Prostate gland (tissue), 2 donors: ENCODE measurements at regions of chr14 and their contacts with region 1.

Region 1: DNA sequence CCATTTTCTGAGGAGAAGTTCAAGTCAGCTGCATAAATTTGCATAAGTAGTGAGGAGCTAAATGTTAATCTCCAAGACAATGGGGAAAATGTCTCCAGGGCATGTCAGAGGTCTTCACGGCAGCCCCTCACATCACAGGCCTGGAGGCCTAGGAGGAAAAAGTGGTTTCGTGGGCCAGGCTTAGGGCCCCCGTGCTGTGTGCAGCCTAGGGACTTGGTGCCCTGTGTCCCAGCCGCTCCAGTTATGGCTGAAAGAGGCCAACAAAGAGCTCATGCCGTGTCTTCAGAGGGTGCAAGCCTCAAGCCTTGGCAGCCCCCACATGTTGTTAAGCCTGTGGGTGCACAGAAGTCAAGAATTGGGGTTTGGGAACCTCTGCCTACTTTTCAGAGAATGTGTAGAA is 41.9 kb upstream of the RD3L start:
- DNase-seq: no peak
- H3K4me3 ChIP-seq: no peak overlapping the region
- H3K27ac ChIP-seq: no peak overlapping the region
- H3K4me1 ChIP-seq: no peaks in the 10 kb centered on the region
- H3K27me3 ChIP-seq: no peaks in the 10 kb centered on the region
- CTCF ChIP-seq: no peak
- POLR2A ChIP-seq: no peak

Region 2: DNA sequence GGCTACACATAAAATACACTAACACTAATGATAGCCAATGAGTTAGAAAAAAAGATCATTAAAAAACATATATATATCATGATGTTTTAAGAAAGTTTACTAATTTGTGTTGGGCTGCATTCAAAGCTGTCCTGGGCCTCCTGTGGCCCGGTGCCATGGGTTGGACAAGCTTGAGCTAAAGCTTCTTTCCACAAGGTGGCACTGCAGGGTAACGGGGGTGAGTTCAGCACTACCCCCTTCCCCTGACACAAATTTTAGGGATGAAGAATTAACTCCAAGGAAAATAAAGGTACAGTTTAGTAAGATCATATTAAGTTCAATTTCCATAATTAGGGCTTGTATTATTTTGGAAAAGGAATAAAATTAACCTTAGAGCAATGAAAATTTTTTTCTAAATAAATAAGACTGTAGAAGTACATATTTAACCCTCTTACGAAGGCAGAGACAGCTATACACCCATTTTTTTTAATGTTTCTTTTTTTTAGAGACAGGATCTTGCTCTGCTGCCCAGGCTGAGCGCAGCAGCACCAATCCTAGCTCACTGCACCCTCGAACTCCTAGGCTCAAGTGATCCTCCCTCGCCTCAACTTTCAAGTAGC is 175.7 kb before region 1 on chr14:
- intact Hi-C with region 1: loop called (anchors 2 kb)
- DNase-seq: peak; percentile 86
- H3K4me3 ChIP-seq: no peak overlapping the region
- H3K27ac ChIP-seq: no peak overlapping the region
- H3K4me1 ChIP-seq: peaks cover 4% of the 10 kb centered on the region
- H3K27me3 ChIP-seq: no peaks in the 10 kb centered on the region
- CTCF ChIP-seq: peak; percentile 53 to 93 (median 89)
- POLR2A ChIP-seq: no peak